Activated naive CD4-positive, alpha-beta T cell treated with anti-CD3 and anti-CD28 coated beads for 36 hours (primary cell): ENCODE measurements at regions of chr18 and their contacts with region 1.

Region 1: GRCh38 chr18:58117786-58118403 is 73.9 kb downstream of the NEDD4L start:
- DNase-seq: peak; percentile 24
- H3K4me3 Mint-ChIP-seq: no peak overlapping the region
- H3K27ac Mint-ChIP-seq: no peak overlapping the region
- H3K4me1 Mint-ChIP-seq: peaks cover 5% of the 10 kb centered on the region
- H3K27me3 Mint-ChIP-seq: no peaks in the 10 kb centered on the region

Region 2: GRCh38 chr18:57959278-57959677 is 158.6 kb before region 1 on chr18:
- CTCF ChIA-PET with region 1: interaction called, 3 read pairs
- intact Hi-C with region 1: loop called (anchors 1 kb)
- DNase-seq: peak; percentile 18
- H3K4me3 Mint-ChIP-seq: no peak overlapping the region
- H3K27ac Mint-ChIP-seq: no peak overlapping the region
- H3K4me1 Mint-ChIP-seq: no peaks in the 10 kb centered on the region
- H3K27me3 Mint-ChIP-seq: peaks cover 9% of the 10 kb centered on the region

Region 3: GRCh38 chr18:57970356-57971080 is 147.4 kb before region 1 on chr18:
- CTCF ChIA-PET with region 1: interaction called, 3 read pairs
- intact Hi-C with region 1: loop called (anchors 2 kb)
- DNase-seq: peak; percentile 19
- H3K4me3 Mint-ChIP-seq: no peak overlapping the region
- H3K27ac Mint-ChIP-seq: no peak overlapping the region
- H3K4me1 Mint-ChIP-seq: no peaks in the 10 kb centered on the region
- H3K27me3 Mint-ChIP-seq: peaks cover 5% of the 10 kb centered on the region

Region 4: GRCh38 chr18:58051765-58052460 is 66.0 kb before region 1 on chr18:
- CTCF ChIA-PET with region 1: interaction called, 7 read pairs
- intact Hi-C with region 1: loop called (anchors 1 kb)
- DNase-seq: no peak
- H3K4me3 Mint-ChIP-seq: no peak overlapping the region
- H3K27ac Mint-ChIP-seq: no peak overlapping the region
- H3K4me1 Mint-ChIP-seq: peaks cover 9% of the 10 kb centered on the region
- H3K27me3 Mint-ChIP-seq: peaks cover 2% of the 10 kb centered on the region

Region 5: DNA sequence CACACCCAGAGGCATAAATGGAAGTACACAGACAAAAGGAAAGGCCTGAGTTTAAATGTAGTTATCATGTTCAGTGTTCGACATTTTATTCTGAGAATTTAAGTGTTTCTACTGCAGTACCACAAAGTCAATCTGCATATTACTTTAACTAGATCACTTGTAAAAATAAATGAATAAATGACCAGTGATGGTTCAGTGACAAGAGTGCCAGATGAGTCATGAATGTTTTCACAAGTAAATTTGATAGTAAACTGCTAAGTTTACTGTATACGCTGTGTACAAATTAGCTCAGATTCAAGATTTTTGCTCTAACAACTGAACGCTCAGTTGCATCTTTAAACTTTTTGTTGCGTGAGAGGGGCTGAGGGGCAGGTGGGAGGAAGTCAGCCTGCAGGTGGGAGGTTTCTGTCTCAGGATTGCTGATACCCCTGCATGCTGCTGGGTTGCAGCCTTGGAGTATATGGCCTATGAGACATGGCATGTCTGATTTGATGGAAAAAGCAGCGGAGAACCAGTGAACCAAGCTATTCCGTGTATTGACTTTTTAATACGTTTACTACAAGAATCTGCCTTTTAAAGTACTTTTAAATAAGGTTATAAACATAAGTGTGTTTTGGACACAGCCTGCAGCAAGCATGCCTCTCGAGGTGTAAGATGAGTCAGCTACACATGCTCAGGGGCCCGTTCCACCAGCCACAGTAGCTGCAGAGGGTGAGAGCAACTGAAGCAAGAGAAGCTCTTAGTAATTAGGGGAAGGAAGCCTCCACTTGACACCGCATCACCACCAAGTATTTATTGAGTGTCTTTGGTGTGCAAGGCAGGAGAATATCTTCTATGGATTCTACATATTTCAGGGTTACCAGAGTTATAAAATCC is 171.3 kb after region 1 on chr18:
- CTCF ChIA-PET with region 1: no interaction called
- intact Hi-C with region 1: no loop called
- DNase-seq: no peak
- H3K4me3 Mint-ChIP-seq: no peak overlapping the region
- H3K27ac Mint-ChIP-seq: no peak overlapping the region
- H3K4me1 Mint-ChIP-seq: no peaks in the 10 kb centered on the region
- H3K27me3 Mint-ChIP-seq: no peaks in the 10 kb centered on the region

Region 6: GRCh38 chr18:58847383-58848071 is 729.6 kb after region 1 on chr18:
- CTCF ChIA-PET with region 1: no interaction called
- intact Hi-C with region 1: no loop called
- DNase-seq: peak; percentile 15
- H3K4me3 Mint-ChIP-seq: no peak overlapping the region
- H3K27ac Mint-ChIP-seq: no peak overlapping the region
- H3K4me1 Mint-ChIP-seq: peaks cover 6% of the 10 kb centered on the region
- H3K27me3 Mint-ChIP-seq: peaks cover 60% of the 10 kb centered on the region